ENCODE measurements at regions of chr11 and their contacts with region 1.

Region 1: GRCh38 chr11:74449369-74449931 is 17.9 kb downstream of the KCNE3 start:
- DNase-seq: peak; percentile 39
- H3K4me3 ChIP-seq: no peak overlapping the region
- H3K27ac ChIP-seq: no peak overlapping the region
- H3K4me1 ChIP-seq: peaks cover 2 to 16% (median 8%) of the 10 kb centered on the region in 4 donors
- H3K27me3 ChIP-seq: no peaks in the 10 kb centered on the region
- CTCF ChIP-seq: peak; percentile 55 to 82 (median 70)
- EP300 ChIP-seq: no peak
- POLR2A ChIP-seq: no peak

Region 2: GRCh38 chr11:73493956-73494598 is 955.4 kb before region 1 on chr11:
- in situ Hi-C with region 1: no loop called
- intact Hi-C with region 1: no loop called
- DNase-seq: no peak
- H3K4me3 ChIP-seq: no peak overlapping the region
- H3K27ac ChIP-seq: no peak overlapping the region
- H3K4me1 ChIP-seq: peaks cover 0 to 10% (median 0%) of the 10 kb centered on the region in 4 donors
- H3K27me3 ChIP-seq: no peaks in the 10 kb centered on the region
- CTCF ChIP-seq: no peak
- EP300 ChIP-seq: no peak
- POLR2A ChIP-seq: no peak

Region 3: GRCh38 chr11:74262725-74263124 is 186.7 kb before region 1 on chr11:
- in situ Hi-C with region 1: loop called in 3 of 4 experiments (anchors 5 to 10 kb)
- intact Hi-C with region 1: loop called (anchors 2 kb)
- DNase-seq: no peak
- H3K4me3 ChIP-seq: no peak overlapping the region
- H3K27ac ChIP-seq: no peak overlapping the region
- H3K4me1 ChIP-seq: peaks cover 0 to 7% (median under 1%) of the 10 kb centered on the region in 4 donors
- H3K27me3 ChIP-seq: no peaks in the 10 kb centered on the region
- CTCF ChIP-seq: no peak
- EP300 ChIP-seq: no peak
- POLR2A ChIP-seq: no peak

Region 4: DNA sequence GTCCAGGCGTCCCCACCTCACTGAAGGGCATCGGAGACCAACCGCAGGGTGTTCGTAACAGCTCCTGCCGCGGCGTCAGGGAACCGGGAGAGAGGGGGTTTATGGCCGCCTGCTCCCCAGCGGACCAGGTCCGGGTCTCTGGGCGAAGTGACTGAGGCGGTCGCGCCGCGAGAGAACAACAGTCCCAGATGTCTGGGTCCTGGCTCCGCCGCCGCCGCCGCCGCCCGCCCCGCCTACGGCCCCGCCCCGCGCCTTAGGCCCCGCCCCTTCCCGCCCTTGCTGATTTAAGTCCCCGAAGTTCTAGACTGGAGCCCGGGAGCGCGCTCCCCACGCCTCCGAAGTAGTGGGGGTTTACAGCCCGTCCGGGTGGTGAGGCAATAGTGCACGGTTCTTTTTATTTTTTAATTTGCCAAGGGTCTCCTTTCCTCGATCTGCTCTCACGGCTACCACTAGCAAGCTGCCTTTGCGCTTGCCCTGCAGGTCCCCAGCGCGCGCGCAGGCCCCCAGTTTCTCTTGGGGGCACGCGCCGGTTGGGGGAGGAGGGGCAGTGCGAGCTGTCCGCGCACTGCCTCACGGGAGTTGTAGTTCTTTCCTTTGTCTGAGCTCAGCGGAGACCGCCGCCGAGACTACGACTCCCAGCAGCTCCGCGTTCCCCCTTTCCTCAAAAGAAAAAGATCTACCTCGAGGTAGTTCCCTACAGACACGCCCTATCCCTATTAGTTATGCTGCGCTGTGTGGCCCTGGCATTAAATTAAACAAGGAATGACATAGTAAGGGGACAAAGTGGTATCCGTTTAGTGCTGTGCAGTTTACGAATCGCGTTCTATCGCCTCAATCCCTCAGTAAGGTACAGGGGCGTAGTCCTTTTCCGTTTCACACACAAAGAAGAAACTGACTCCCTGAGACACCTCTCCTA is 50.9 kb before region 1 on chr11 and contains the start of gene PGM2L1:
- in situ Hi-C with region 1: loop called in 1 of 4 experiments (anchors 10 kb)
- intact Hi-C with region 1: no loop called
- DNase-seq: peak; percentile 96
- H3K4me3 ChIP-seq: peak within 1 kb of the TSS; percentile 64 to 91 (median 76)
- H3K27ac ChIP-seq: peak within 1 kb of the TSS; percentile 88 to 96 (median 94)
- H3K4me1 ChIP-seq: peaks cover 3 to 15% (median 11%) of the 10 kb centered on the region in 4 donors
- H3K27me3 ChIP-seq: no peaks in the 10 kb centered on the region
- CTCF ChIP-seq: no peak
- EP300 ChIP-seq: no peak
- POLR2A ChIP-seq: peak; percentile 80
- total RNA-seq, gene PGM2L1: 2.6 to 10.1 (median 8.3) TPM

Region 5: DNA sequence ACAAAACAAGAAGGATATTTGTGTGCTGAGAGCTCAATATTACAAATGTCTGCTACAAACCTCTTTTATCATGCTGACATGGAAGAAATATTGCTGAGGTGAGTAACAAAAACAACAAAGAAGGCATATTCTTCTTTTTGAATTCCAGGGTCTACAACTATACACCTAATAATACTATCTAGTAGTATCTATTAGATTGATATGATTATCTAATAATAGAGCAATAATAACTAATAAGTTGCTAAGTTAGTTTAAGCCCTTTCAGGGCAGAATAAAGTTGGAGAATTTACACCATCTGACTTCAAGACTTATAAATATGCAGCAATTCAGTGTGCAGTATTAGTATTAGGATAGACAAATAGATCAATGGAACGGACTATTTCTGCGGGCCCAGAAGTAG is 39.8 kb before region 1 on chr11:
- in situ Hi-C with region 1: no loop called
- intact Hi-C with region 1: no loop called
- DNase-seq: no peak
- H3K4me3 ChIP-seq: no peak overlapping the region
- H3K27ac ChIP-seq: no peak overlapping the region
- H3K4me1 ChIP-seq: no peaks in the 10 kb centered on the region
- H3K27me3 ChIP-seq: no peaks in the 10 kb centered on the region
- CTCF ChIP-seq: no peak
- EP300 ChIP-seq: no peak
- POLR2A ChIP-seq: no peak

Region 6: GRCh38 chr11:74504100-74504695 is 54.7 kb after region 1 on chr11:
- in situ Hi-C with region 1: no loop called
- intact Hi-C with region 1: no loop called
- DNase-seq: no peak
- H3K4me3 ChIP-seq: no peak overlapping the region
- H3K27ac ChIP-seq: no peak overlapping the region
- H3K4me1 ChIP-seq: no peaks in the 10 kb centered on the region
- H3K27me3 ChIP-seq: no peaks in the 10 kb centered on the region
- CTCF ChIP-seq: no peak
- EP300 ChIP-seq: no peak
- POLR2A ChIP-seq: no peak

Region 7: DNA sequence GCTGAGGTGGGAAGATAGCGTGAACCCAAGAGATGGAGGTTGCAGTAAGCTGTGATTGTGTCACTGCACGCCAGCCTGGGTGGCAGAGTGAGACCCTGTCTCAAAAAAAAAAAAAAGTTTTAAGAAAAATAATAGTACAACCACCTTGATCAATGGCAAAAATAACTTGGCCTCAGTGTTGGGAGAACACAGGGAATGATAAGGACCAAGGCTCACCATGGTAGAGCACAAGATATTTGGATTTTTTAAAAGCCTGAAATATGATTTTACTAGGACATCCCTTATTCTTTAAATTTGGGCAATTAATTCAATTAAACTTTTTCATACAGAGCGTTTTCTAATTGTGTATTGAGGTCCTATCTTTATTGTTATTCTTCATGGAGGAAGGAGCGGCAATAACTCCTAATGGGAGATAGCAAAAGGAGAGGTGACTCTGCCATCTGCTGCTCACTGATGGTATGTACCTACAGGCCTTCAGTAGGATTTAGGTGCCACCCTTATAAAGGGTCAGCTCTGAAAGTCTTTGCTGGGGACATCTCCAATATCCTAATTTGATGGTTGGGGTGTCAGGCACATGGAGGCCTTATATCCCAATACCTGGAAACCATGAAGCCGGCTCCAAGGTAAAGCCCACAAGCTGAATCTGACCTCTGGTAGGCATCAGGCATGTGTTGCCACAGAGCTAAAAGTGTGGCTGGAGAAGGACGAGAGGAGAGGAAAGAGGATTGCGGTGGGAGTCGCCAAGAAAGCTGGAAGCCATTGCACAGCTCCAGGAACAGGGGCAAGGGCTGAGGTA is 121.0 kb after region 1 on chr11:
- in situ Hi-C with region 1: loop called (anchors 5 to 10 kb)
- intact Hi-C with region 1: no loop called
- DNase-seq: peak; percentile 66
- H3K4me3 ChIP-seq: no peak overlapping the region
- H3K27ac ChIP-seq: peak overlapping the region in 3 of 4 donors; percentile 63 to 73 (median 65)
- H3K4me1 ChIP-seq: peaks cover 0 to 34% (median 20%) of the 10 kb centered on the region in 4 donors
- H3K27me3 ChIP-seq: no peaks in the 10 kb centered on the region
- CTCF ChIP-seq: peak; percentile 56 to 87 (median 67)
- EP300 ChIP-seq: no peak
- POLR2A ChIP-seq: no peak

Region 8: GRCh38 chr11:74672956-74673692 is 223.7 kb after region 1 on chr11:
- in situ Hi-C with region 1: no loop called
- intact Hi-C with region 1: no loop called
- DNase-seq: peak; percentile 59
- H3K4me3 ChIP-seq: no peak overlapping the region
- H3K27ac ChIP-seq: peak overlapping the region; percentile 67 to 81 (median 74)
- H3K4me1 ChIP-seq: peaks cover 3 to 15% (median 9%) of the 10 kb centered on the region in 4 donors
- H3K27me3 ChIP-seq: no peaks in the 10 kb centered on the region
- CTCF ChIP-seq: no peak
- EP300 ChIP-seq: no peak
- POLR2A ChIP-seq: no peak

Region 9: DNA sequence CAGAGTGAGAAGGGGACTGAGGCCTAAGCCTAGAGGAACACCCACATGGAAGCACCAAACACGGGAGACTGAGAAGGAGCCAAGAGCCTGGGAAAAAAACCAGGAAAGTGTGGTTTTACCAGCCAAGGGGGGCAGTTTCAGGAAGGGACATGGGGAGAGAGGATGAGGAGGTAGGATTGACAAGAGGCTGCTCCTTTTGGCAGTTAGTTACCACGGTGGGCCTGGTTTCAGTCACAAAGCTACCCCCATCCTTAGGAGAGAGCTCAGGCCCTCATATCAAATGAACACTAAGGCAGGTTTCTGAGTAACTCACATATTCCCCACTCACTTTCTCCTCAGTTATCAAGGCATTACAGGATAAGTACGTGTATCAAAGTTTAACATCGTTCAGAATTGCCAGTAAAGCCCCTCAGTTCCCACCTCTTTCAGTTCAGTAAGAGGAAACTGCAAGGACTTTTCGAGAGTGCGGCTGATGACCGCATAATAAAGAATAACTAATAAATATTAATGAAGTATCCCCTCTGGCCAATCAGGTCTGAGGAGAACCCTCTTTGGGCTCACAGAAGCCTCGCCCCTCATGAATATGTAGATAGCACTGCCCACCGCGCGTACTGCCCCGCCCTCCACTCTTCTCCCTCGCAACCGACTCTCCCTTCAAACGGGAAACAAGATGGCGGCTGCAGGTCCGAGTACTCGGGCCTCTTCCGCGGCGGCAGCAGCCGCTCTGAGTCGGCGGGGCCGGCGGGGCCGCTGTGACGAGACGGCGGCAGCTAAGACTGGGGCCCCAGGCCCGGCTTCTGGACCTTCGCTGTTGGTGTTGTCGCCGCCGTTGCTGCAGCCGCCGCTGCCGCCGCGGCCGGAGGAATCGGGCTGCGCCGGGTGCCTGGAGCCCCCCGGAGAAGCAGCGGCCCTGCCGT is 299.0 kb after region 1 on chr11 and contains the start of gene RNF169:
- in situ Hi-C with region 1: loop called in 3 of 4 experiments (anchors 25 kb)
- intact Hi-C with region 1: no loop called
- DNase-seq: peak; percentile 94
- H3K4me3 ChIP-seq: peak within 1 kb of the TSS; percentile 97 to 99 (median 98)
- H3K27ac ChIP-seq: peak within 1 kb of the TSS; percentile 96 to 99 (median 98)
- H3K4me1 ChIP-seq: peaks cover 13 to 39% (median 18%) of the 10 kb centered on the region in 4 donors
- H3K27me3 ChIP-seq: no peaks in the 10 kb centered on the region
- CTCF ChIP-seq: no peak
- EP300 ChIP-seq: no peak
- POLR2A ChIP-seq: peak; percentile 74
- total RNA-seq, gene RNF169: 15.1 to 22.4 (median 16.6) TPM